ENCODE measurements at regions of chr9 and their contacts with region 1.

Region 1: DNA sequence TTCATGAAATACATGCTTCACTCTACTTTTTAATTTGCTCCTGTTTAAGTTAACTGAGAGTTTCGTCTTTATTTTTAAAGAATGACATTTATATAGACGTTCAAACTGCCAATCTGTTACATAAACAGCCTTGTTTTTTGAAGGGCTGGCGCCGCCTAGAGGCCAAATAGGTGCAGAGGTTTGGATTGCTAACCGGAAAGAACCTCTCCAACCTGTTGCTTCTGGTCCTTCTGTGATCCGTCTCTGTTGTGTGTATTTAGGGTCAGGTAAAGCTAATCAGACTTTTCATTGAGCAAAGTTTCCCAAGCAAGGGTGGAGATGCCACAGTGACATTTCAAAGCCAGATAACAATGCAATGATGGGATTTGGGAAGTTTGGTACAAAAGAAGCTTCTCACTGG is 39.5 kb upstream of the GLIS3 start:
- DNase-seq: peak; percentile 71 to 79 (median 76)
- H3K4me3 ChIP-seq: no peak overlapping the region
- H3K4me3 Mint-ChIP-seq: peak overlapping the region in 2 of 8 donors; percentile 44 to 64
- H3K27ac ChIP-seq: no peak overlapping the region
- H3K27ac Mint-ChIP-seq: peak overlapping the region in 6 of 7 donors; percentile 37 to 91 (median 58)
- H3K4me1 ChIP-seq: no peaks in the 10 kb centered on the region
- H3K4me1 Mint-ChIP-seq: peaks cover 3 to 12% (median 4%) of the 10 kb centered on the region in 4 donors
- H3K27me3 ChIP-seq: no peaks in the 10 kb centered on the region
- H3K27me3 Mint-ChIP-seq: peaks cover 0 to 1% of the 10 kb centered on the region in 2 donors

Region 2: GRCh38 chr9:3240656-3241268 is 1098.6 kb before region 1 on chr9:
- CTCF ChIA-PET with region 1: interaction called, 3 read pairs
- POLR2A ChIA-PET with region 1: no interaction called
- intact Hi-C with region 1: loop called (anchors 1 kb)
- DNase-seq: peak; percentile 38 to 53 (median 43)
- H3K4me3 ChIP-seq: no peak overlapping the region
- H3K4me3 Mint-ChIP-seq: no peak overlapping the region
- H3K27ac ChIP-seq: no peak overlapping the region
- H3K27ac Mint-ChIP-seq: no peak overlapping the region
- H3K4me1 ChIP-seq: no peaks in the 10 kb centered on the region
- H3K4me1 Mint-ChIP-seq: peaks cover 0 to 1% (median 0%) of the 10 kb centered on the region in 4 donors
- H3K27me3 ChIP-seq: no peaks in the 10 kb centered on the region
- H3K27me3 Mint-ChIP-seq: no peaks in the 10 kb centered on the region

Region 3: GRCh38 chr9:3732077-3733038 is 607.0 kb before region 1 on chr9:
- CTCF ChIA-PET with region 1: interaction called, 4 read pairs
- POLR2A ChIA-PET with region 1: no interaction called
- intact Hi-C with region 1: loop called (anchors 1 kb)
- DNase-seq: peak in 4 of 5 donors; percentile 38 to 43 (median 39)
- H3K4me3 ChIP-seq: no peak overlapping the region
- H3K4me3 Mint-ChIP-seq: peak overlapping the region in 6 of 8 donors; percentile 3 to 72 (median 42)
- H3K27ac ChIP-seq: no peak overlapping the region
- H3K27ac Mint-ChIP-seq: peak overlapping the region in 4 of 7 donors; percentile 49 to 76 (median 55)
- H3K4me1 ChIP-seq: peaks cover 10% of the 10 kb centered on the region
- H3K4me1 Mint-ChIP-seq: peaks cover 5 to 13% (median 12%) of the 10 kb centered on the region in 4 donors
- H3K27me3 ChIP-seq: no peaks in the 10 kb centered on the region
- H3K27me3 Mint-ChIP-seq: no peaks in the 10 kb centered on the region

Region 4: GRCh38 chr9:4297151-4297785 is 42.1 kb before region 1 on chr9:
- CTCF ChIA-PET with region 1: interaction called, 5 read pairs
- POLR2A ChIA-PET with region 1: no interaction called
- intact Hi-C with region 1: loop called (anchors 1 kb)
- DNase-seq: peak in 4 of 5 donors; percentile 11 to 52 (median 22)
- H3K4me3 ChIP-seq: peak overlapping the region; percentile 34 to 72
- H3K4me3 Mint-ChIP-seq: peak overlapping the region; percentile 93 to 99 (median 95)
- H3K27ac ChIP-seq: no peak overlapping the region
- H3K27ac Mint-ChIP-seq: peak overlapping the region; percentile 48 to 90 (median 61)
- H3K4me1 ChIP-seq: peaks cover 16% of the 10 kb centered on the region
- H3K4me1 Mint-ChIP-seq: peaks cover 4 to 32% (median 19%) of the 10 kb centered on the region in 4 donors
- H3K27me3 ChIP-seq: no peaks in the 10 kb centered on the region
- H3K27me3 Mint-ChIP-seq: peaks cover 15 to 36% of the 10 kb centered on the region in 2 donors

Region 5: DNA sequence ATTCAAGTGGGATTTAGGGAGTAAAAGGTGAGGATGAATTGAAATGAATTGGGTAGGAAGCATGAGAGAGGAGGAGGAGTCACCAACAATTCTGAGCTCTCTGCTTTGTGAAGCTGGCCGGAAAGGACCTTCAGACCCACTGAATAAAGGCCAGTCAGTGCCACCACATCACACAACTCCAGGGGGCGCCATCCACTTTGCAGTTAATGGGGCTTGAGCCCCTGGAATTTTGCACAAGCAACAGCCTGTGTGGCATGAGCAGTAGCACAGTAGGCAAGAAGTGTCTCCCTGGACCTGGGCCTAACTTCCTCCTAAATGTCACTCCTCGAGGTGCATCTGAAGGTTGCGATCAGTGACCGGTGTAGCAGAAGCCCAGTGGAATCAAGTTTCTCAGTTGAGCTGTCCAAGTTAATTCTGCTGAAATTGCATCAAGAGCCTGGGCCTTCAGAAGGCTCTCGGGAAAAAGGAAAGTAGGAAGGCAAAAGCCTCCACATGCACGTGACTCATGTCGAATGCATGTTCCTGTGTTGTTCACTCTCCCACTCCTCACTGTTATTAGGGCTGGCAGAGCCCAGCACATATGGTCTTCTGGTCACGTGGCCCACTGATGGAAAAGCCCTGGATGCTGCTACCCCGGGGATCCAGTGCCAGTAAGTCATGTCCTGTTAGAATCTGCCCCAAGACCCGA is 11.7 kb before region 1 on chr9:
- CTCF ChIA-PET with region 1: interaction called, 25 read pairs
- POLR2A ChIA-PET with region 1: no interaction called
- intact Hi-C with region 1: no loop called
- DNase-seq: no peak
- H3K4me3 ChIP-seq: no peak overlapping the region
- H3K4me3 Mint-ChIP-seq: no peak overlapping the region
- H3K27ac ChIP-seq: no peak overlapping the region
- H3K27ac Mint-ChIP-seq: no peak overlapping the region
- H3K4me1 ChIP-seq: no peaks in the 10 kb centered on the region
- H3K4me1 Mint-ChIP-seq: peaks cover 0 to 9% (median 3%) of the 10 kb centered on the region in 4 donors
- H3K27me3 ChIP-seq: no peaks in the 10 kb centered on the region
- H3K27me3 Mint-ChIP-seq: peaks cover 3 to 4% of the 10 kb centered on the region in 2 donors